Activated CD4-positive, alpha-beta memory T cell treated with anti-CD3 and anti-CD28 coated beads for 36 hours (primary cell): ENCODE measurements at regions of chr10 and their contacts with region 1.

Region 1: DNA sequence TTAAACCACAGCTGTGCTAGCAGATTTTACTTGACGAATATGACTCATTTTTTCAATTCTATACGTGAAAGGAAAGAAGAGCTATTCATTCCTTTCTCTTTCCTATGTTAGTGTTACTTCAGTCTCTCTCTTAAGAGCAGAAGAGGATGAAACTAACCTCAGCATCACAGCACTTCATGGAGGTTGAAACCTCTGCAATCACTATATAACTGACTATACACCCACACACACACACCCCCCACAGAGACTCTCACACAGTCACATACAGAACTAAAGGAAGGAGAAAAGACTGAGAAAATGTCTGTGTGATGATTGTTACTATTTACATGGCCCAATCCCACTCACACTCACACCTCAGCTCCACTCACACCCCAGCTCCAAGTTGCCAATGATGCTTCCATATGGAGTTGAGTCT is 104.2 kb downstream of the KIF20B start:
- DNase-seq: peak; percentile 84
- H3K4me3 Mint-ChIP-seq: no peak overlapping the region
- H3K27ac Mint-ChIP-seq: peak overlapping the region; percentile 4
- H3K4me1 Mint-ChIP-seq: peaks cover 19% of the 10 kb centered on the region
- H3K27me3 Mint-ChIP-seq: peaks cover 35% of the 10 kb centered on the region

Region 2: GRCh38 chr10:89332123-89332633 is 473.4 kb before region 1 on chr10:
- CTCF ChIA-PET with region 1: no interaction called
- POLR2A ChIA-PET with region 1: no interaction called
- intact Hi-C with region 1: loop called (anchors 1 kb)
- DNase-seq: peak; percentile 37
- H3K4me3 Mint-ChIP-seq: peak overlapping the region; percentile 64
- H3K27ac Mint-ChIP-seq: peak overlapping the region; percentile 46
- H3K4me1 Mint-ChIP-seq: peaks cover 63% of the 10 kb centered on the region
- H3K27me3 Mint-ChIP-seq: peaks cover 20% of the 10 kb centered on the region

Region 3: GRCh38 chr10:89701238-89702120 is 104.1 kb before region 1 on chr10 and contains the start of gene KIF20B:
- CTCF ChIA-PET with region 1: no interaction called
- POLR2A ChIA-PET with region 1: no interaction called
- intact Hi-C with region 1: loop called (anchors 1 kb)
- DNase-seq: peak; percentile 98
- H3K4me3 Mint-ChIP-seq: peak within 1 kb of the TSS; percentile 88
- H3K27ac Mint-ChIP-seq: peak within 1 kb of the TSS; percentile 95
- H3K4me1 Mint-ChIP-seq: peaks cover 35% of the 10 kb centered on the region
- H3K27me3 Mint-ChIP-seq: no peaks in the 10 kb centered on the region
- total RNA-seq, gene KIF20B: 65.3 to 65.6 TPM

Region 4: DNA sequence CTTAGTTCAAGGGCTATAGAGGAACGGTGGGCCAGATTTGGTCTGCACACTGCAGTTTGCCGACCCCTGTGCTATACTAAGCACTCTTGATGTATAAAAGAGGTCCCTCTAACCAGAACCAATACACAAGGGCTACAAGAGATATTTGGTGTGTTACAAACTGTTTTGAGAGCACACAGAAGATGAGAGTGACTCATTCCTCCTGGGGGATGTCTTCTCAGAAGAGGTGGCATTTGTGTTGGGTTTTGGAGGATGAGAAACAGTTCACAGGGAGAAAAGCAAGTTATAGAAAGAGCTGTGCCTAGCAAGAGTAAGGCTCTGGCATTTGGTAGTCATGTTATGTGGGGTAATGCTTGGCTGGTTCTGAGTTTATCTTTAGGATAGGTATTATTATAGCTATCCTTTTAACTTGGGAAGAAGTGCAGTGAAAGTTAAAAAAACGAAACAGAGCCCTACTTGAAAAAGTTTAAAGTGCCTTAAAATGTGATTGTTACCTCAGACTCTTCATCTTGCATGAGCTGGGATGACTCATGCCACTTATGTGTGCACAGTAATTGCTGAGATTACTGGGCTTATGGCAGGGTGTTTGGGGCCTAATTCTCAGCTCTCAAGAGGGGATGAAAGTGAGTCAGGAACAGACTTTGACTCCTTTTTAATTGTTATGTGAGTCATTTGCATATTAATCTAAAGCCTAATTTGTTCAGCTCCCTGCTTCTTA is 56.1 kb after region 1 on chr10:
- CTCF ChIA-PET with region 1: no interaction called
- POLR2A ChIA-PET with region 1: interaction called, 7 read pairs
- intact Hi-C with region 1: loop called (anchors 1 kb)
- DNase-seq: peak; percentile 62
- H3K4me3 Mint-ChIP-seq: no peak overlapping the region
- H3K27ac Mint-ChIP-seq: peak overlapping the region; percentile 81
- H3K4me1 Mint-ChIP-seq: peaks cover 27% of the 10 kb centered on the region
- H3K27me3 Mint-ChIP-seq: no peaks in the 10 kb centered on the region

Region 5: DNA sequence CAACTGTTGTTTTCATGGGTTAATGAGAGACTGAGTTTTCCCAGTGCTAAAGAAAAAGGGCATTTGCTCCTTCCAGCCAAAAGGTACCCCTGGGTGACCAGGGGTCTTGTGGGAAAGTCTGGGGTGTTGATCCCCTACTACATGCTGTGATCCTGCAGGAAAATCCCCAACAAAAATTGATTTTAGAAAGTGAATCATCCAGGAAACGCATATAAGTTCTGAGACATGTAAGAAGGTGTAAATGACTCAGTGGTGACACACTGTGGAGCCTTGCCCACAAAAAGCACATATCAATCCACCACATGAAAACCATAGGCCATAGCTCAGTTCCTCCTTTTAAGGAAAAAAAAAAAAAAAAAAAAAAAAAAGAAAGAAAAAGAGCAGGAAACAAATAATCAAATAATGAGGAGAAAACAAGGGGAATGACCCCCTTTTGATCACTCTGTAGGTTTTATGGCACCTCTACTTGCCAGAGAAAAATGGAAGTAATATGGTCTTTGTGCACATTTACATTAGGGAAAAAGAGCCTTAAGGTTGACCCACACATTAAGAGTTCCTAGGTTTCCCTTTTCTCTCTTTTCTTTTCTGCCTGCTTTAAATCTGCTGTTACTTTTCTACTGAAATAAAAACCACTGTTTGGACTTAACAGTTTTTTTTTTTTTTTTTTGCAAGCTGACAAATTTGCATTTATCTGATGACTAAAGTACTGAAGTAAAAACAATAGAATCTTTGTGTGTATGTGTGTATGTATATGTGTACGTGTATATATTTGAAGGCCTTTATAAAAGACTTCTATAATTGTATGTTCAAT is 281.8 kb after region 1 on chr10:
- CTCF ChIA-PET with region 1: interaction called, 3 read pairs
- POLR2A ChIA-PET with region 1: no interaction called
- intact Hi-C with region 1: loop called (anchors 10 kb)
- DNase-seq: peak; percentile 24
- H3K4me3 Mint-ChIP-seq: no peak overlapping the region
- H3K27ac Mint-ChIP-seq: no peak overlapping the region
- H3K4me1 Mint-ChIP-seq: peaks cover 7% of the 10 kb centered on the region
- H3K27me3 Mint-ChIP-seq: no peaks in the 10 kb centered on the region